Endothelial cell of umbilical vein (primary cell): ENCODE measurements at regions of chr11 and their contacts with region 1.

Region 1: DNA sequence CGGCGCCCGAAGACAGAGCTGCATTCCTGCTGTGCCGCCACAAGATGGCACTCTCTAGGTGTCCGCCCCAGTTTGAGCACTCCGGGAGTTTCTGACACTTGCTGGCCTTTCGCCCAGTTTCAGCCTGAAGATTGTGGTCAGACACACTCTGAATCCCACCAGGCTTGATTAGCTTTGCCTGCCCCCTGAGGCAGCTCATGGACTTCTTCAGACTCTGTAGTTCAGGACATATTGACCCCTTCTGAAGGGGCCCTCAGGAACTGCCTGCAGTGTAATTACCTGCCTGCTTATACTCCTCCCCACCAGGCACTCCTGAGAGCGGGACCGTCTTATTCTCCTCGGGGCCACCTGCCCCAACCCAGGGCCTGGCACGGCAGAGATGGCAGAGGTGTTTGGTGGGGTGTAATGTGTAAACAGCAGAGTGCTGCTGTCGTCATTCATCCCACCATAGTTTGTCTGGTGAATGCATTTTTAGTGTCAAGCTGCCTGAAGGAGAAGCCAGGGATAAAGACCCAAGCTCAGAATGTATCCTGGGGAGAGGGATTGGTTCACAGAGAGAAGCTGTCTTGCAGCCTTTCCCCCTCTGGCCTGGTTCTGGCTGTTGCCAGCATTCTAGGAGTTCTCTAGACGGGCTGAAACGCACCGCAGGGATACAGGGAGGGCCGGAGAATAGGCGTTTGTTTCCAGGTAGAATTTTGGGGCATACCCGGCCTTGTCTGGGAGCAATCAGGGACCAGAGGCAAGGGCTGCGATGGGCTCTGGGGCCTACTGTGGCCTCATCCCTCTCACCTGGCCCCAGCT is 46.4 kb downstream of the EIF3F start:
- DNase-seq: peak; percentile 63
- H3K4me3 ChIP-seq: no peak overlapping the region
- H3K27ac ChIP-seq: no peak overlapping the region
- H3K4me1 ChIP-seq: no peaks in the 10 kb centered on the region
- H3K27me3 ChIP-seq: no peaks in the 10 kb centered on the region
- CTCF ChIP-seq: peak; percentile 83 to 92
- POLR2A ChIP-seq: no peak

Region 2: GRCh38 chr11:7965386-7965785 is 68.1 kb before region 1 on chr11 and contains the start of gene NLRP10:
- CTCF ChIA-PET with region 1: no interaction called
- POLR2A ChIA-PET with region 1: no interaction called
- dilution Hi-C with region 1: no loop called
- intact Hi-C with region 1: no loop called
- DNase-seq: no peak
- H3K4me3 ChIP-seq: no peak within 1 kb of the TSS
- H3K27ac ChIP-seq: no peak within 1 kb of the TSS
- H3K4me1 ChIP-seq: no peaks in the 10 kb centered on the region
- H3K27me3 ChIP-seq: peaks cover 0 to 2% of the 10 kb centered on the region in 2 experiments
- CTCF ChIP-seq: no peak
- POLR2A ChIP-seq: no peak
- total RNA-seq, gene NLRP10: not detected in 2 replicates

Region 3: GRCh38 chr11:8006349-8006977 is 27.0 kb before region 1 on chr11:
- CTCF ChIA-PET with region 1: interaction called, 70 read pairs
- POLR2A ChIA-PET with region 1: no interaction called
- dilution Hi-C with region 1: no loop called
- intact Hi-C with region 1: loop called (anchors 1 kb)
- DNase-seq: peak; percentile 61
- H3K4me3 ChIP-seq: no peak overlapping the region
- H3K27ac ChIP-seq: no peak overlapping the region
- H3K4me1 ChIP-seq: no peaks in the 10 kb centered on the region
- H3K27me3 ChIP-seq: peaks cover 0 to 2% of the 10 kb centered on the region in 2 experiments
- CTCF ChIP-seq: peak; percentile 83
- POLR2A ChIP-seq: no peak

Region 4: GRCh38 chr11:8045839-8046238 is 12.3 kb after region 1 on chr11:
- CTCF ChIA-PET with region 1: interaction called, 14 read pairs
- POLR2A ChIA-PET with region 1: no interaction called
- dilution Hi-C with region 1: no loop called
- intact Hi-C with region 1: no loop called
- DNase-seq: no peak
- H3K4me3 ChIP-seq: no peak overlapping the region
- H3K27ac ChIP-seq: no peak overlapping the region
- H3K4me1 ChIP-seq: no peaks in the 10 kb centered on the region
- H3K27me3 ChIP-seq: peaks cover 3 to 21% of the 10 kb centered on the region in 2 experiments
- CTCF ChIP-seq: no peak
- POLR2A ChIP-seq: no peak

Region 5: GRCh38 chr11:8070417-8071115 is 37.1 kb after region 1 on chr11:
- CTCF ChIA-PET with region 1: interaction called, 32 read pairs
- POLR2A ChIA-PET with region 1: no interaction called
- dilution Hi-C with region 1: no loop called
- intact Hi-C with region 1: loop called (anchors 1 kb)
- DNase-seq: peak; percentile 21
- H3K4me3 ChIP-seq: no peak overlapping the region
- H3K27ac ChIP-seq: no peak overlapping the region
- H3K4me1 ChIP-seq: peaks cover 3% of the 10 kb centered on the region
- H3K27me3 ChIP-seq: peaks cover 8 to 10% of the 10 kb centered on the region in 2 experiments
- CTCF ChIP-seq: peak in 1 of 2 donors; percentile 18
- POLR2A ChIP-seq: no peak

Region 6: GRCh38 chr11:8087185-8087584 is 53.7 kb after region 1 on chr11:
- CTCF ChIA-PET with region 1: interaction called, 528 read pairs
- POLR2A ChIA-PET with region 1: no interaction called
- dilution Hi-C with region 1: no loop called
- intact Hi-C with region 1: loop called (anchors 1 kb)
- DNase-seq: no peak
- H3K4me3 ChIP-seq: no peak overlapping the region
- H3K27ac ChIP-seq: no peak overlapping the region
- H3K4me1 ChIP-seq: no peaks in the 10 kb centered on the region
- H3K27me3 ChIP-seq: no peaks in the 10 kb centered on the region
- CTCF ChIP-seq: peak in 1 of 2 donors; percentile 13
- POLR2A ChIP-seq: no peak

Region 7: DNA sequence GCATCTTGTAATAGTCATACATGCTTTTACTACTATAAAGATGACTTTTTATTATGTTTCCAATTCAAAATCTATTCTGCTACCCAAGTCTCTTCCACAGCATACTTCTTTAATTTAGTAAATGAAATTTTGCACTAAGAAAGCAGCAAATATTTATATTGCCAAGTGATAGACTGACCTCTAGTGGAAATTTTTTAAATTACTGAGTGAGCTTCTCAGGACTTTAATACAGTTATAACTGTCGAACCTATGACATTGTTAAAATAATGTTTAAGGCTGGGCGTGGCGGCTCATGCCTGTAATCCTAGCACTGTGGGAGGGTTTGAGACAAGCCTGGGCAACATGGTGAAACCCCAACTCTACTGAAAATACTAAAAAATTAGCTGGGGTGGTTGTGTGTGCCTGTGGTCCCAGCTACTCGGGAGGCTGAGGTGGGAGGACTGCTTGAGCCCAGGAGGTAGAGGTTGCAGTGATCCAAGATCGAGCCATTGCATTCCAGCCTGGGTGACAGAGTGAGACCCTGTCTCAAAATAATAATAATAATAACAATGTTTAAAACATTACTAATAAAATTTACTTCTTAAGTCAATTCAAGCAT is 533.2 kb after region 1 on chr11:
- CTCF ChIA-PET with region 1: interaction called, 12 read pairs
- POLR2A ChIA-PET with region 1: no interaction called
- dilution Hi-C with region 1: no loop called
- intact Hi-C with region 1: no loop called
- DNase-seq: peak; percentile 50
- H3K4me3 ChIP-seq: no peak overlapping the region
- H3K27ac ChIP-seq: no peak overlapping the region
- H3K4me1 ChIP-seq: peaks cover 3% of the 10 kb centered on the region
- H3K27me3 ChIP-seq: peaks cover 6 to 7% of the 10 kb centered on the region in 2 experiments
- CTCF ChIP-seq: peak; percentile 19 to 28
- POLR2A ChIP-seq: no peak